ENCODE measurements at regions of chr10 and their contacts with region 1.

Region 1: DNA sequence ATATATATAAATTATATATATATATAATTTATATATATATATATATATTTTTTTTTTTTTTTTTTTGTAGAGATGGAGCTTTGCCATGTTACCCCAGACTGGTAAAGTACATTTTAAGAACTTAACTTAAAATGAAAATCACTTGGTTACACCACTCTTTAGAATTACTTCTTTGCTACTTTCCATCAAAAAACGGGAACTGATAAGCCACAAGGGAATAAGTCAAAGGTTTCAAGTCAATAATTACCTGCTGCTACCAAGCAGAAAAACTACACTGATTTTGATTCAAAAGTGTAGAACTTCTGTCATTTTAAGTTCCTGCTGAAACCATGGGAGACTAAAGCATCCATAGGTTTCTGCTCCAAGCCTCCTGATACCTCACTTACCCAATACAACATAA is 12.2 kb downstream of the PPA1 start:
- DNase-seq: no peak
- H3K4me3 ChIP-seq: no peak overlapping the region
- H3K4me3 Mint-ChIP-seq: peak overlapping the region in 1 of 7 donors; percentile 64
- H3K27ac ChIP-seq: no peak overlapping the region
- H3K27ac Mint-ChIP-seq: peak overlapping the region in 6 of 8 donors; percentile 13 to 81 (median 69)
- H3K4me1 ChIP-seq: peaks cover 4% of the 10 kb centered on the region
- H3K4me1 Mint-ChIP-seq: peaks cover 13 to 18% (median 18%) of the 10 kb centered on the region in 3 donors
- H3K27me3 ChIP-seq: no peaks in the 10 kb centered on the region
- H3K27me3 Mint-ChIP-seq: no peaks in the 10 kb centered on the region

Region 2: DNA sequence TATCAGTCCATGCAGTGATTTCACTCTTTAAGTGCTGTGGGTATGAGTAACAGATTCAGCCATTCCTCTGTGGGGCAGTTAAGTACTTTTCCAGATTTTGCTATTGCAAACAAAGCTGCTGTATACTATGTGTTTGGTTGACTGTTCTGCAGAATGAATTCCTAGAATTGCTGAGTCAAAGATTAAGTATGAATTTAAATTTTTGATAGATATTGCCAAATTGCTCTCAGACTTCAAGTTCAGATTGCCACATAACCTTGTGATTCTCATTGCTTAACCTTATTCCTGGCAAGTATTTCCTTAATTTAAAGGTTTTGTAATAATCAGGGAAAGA is 29.1 kb before region 1 on chr10:
- CTCF ChIA-PET with region 1: no interaction called
- POLR2A ChIA-PET with region 1: no interaction called
- DNase-seq: no peak
- H3K4me3 ChIP-seq: no peak overlapping the region
- H3K4me3 Mint-ChIP-seq: no peak overlapping the region
- H3K27ac ChIP-seq: no peak overlapping the region
- H3K27ac Mint-ChIP-seq: no peak overlapping the region
- H3K4me1 ChIP-seq: peaks cover 2% of the 10 kb centered on the region
- H3K4me1 Mint-ChIP-seq: peaks cover 3 to 7% (median 5%) of the 10 kb centered on the region in 3 donors
- H3K27me3 ChIP-seq: no peaks in the 10 kb centered on the region
- H3K27me3 Mint-ChIP-seq: no peaks in the 10 kb centered on the region

Region 3: GRCh38 chr10:70233109-70233938 is 12.3 kb after region 1 on chr10 and contains the start of gene PPA1:
- CTCF ChIA-PET with region 1: interaction called, 25 read pairs
- POLR2A ChIA-PET with region 1: no interaction called
- DNase-seq: peak; percentile 99
- H3K4me3 ChIP-seq: peak within 1 kb of the TSS; percentile 93
- H3K4me3 Mint-ChIP-seq: peak within 1 kb of the TSS; percentile 82 to 96 (median 88)
- H3K27ac ChIP-seq: peak within 1 kb of the TSS; percentile 75
- H3K27ac Mint-ChIP-seq: peak within 1 kb of the TSS; percentile 84 to 98 (median 94)
- H3K4me1 ChIP-seq: peaks cover 11% of the 10 kb centered on the region
- H3K4me1 Mint-ChIP-seq: peaks cover 17 to 33% (median 32%) of the 10 kb centered on the region in 3 donors
- H3K27me3 ChIP-seq: no peaks in the 10 kb centered on the region
- H3K27me3 Mint-ChIP-seq: no peaks in the 10 kb centered on the region
- total RNA-seq, gene PPA1: 358 to 368 TPM

Region 4: GRCh38 chr10:70272925-70273316 is 51.9 kb after region 1 on chr10:
- CTCF ChIA-PET with region 1: interaction called, 16 read pairs
- POLR2A ChIA-PET with region 1: interaction called, 3 read pairs
- DNase-seq: peak in 2 of 5 donors; percentile 25 to 29
- H3K4me3 ChIP-seq: no peak overlapping the region
- H3K4me3 Mint-ChIP-seq: peak overlapping the region in 4 of 7 donors; percentile 14 to 62 (median 50)
- H3K27ac ChIP-seq: no peak overlapping the region
- H3K27ac Mint-ChIP-seq: peak overlapping the region in 7 of 8 donors; percentile 7 to 61 (median 29)
- H3K4me1 ChIP-seq: no peaks in the 10 kb centered on the region
- H3K4me1 Mint-ChIP-seq: peaks cover 8 to 11% (median 10%) of the 10 kb centered on the region in 3 donors
- H3K27me3 ChIP-seq: no peaks in the 10 kb centered on the region
- H3K27me3 Mint-ChIP-seq: peaks cover 0 to 3% of the 10 kb centered on the region in 2 donors

Measured in CD8-positive, alpha-beta memory T cell (primary cell).